ENCODE measurements at regions of chr17 and their contacts with region 1.

Region 1: DNA sequence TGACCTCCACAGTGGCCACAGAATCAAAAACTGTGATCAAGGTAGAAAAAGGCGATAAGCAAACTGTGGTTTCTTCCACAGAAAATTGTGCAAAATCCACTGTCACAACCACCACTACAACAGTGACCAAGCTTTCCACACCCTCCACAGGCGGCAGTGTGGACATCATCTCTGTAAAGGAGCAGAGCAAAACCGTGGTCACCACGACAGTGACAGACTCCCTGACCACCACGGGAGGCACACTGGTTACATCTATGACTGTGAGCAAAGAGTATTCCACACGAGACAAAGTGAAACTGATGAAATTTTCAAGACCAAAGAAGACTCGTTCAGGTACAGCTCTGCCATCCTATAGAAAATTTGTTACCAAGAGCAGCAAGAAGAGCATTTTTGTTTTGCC is 83.6 kb downstream of the C17orf58 start:
- DNase-seq: peak; percentile 8
- H3K4me3 Mint-ChIP-seq: no peak overlapping the region
- H3K27ac Mint-ChIP-seq: no peak overlapping the region
- H3K4me1 Mint-ChIP-seq: peaks cover 18% of the 10 kb centered on the region
- H3K27me3 Mint-ChIP-seq: no peaks in the 10 kb centered on the region

Region 2: GRCh38 chr17:67717624-67718329 is 194.9 kb before region 1 on chr17 and contains the start of gene NOL11:
- CTCF ChIA-PET with region 1: no interaction called
- intact Hi-C with region 1: loop called (anchors 1 kb)
- DNase-seq: peak; percentile 100
- H3K4me3 Mint-ChIP-seq: peak within 1 kb of the TSS; percentile 100
- H3K27ac Mint-ChIP-seq: peak within 1 kb of the TSS; percentile 99
- H3K4me1 Mint-ChIP-seq: peaks cover 20% of the 10 kb centered on the region
- H3K27me3 Mint-ChIP-seq: peaks cover 3% of the 10 kb centered on the region
- total RNA-seq, gene NOL11: 49.7 to 54.1 TPM

Region 3: GRCh38 chr17:67836205-67836987 is 76.3 kb before region 1 on chr17:
- CTCF ChIA-PET with region 1: no interaction called
- intact Hi-C with region 1: loop called (anchors 2 kb)
- DNase-seq: no peak
- H3K4me3 Mint-ChIP-seq: no peak overlapping the region
- H3K27ac Mint-ChIP-seq: peak overlapping the region; percentile 75
- H3K4me1 Mint-ChIP-seq: peaks cover 74% of the 10 kb centered on the region
- H3K27me3 Mint-ChIP-seq: no peaks in the 10 kb centered on the region

Region 4: GRCh38 chr17:67862614-67863217 is 49.9 kb before region 1 on chr17:
- CTCF ChIA-PET with region 1: no interaction called
- intact Hi-C with region 1: loop called (anchors 5 kb)
- DNase-seq: no peak
- H3K4me3 Mint-ChIP-seq: no peak overlapping the region
- H3K27ac Mint-ChIP-seq: no peak overlapping the region
- H3K4me1 Mint-ChIP-seq: peaks cover 55% of the 10 kb centered on the region
- H3K27me3 Mint-ChIP-seq: no peaks in the 10 kb centered on the region

Region 5: DNA sequence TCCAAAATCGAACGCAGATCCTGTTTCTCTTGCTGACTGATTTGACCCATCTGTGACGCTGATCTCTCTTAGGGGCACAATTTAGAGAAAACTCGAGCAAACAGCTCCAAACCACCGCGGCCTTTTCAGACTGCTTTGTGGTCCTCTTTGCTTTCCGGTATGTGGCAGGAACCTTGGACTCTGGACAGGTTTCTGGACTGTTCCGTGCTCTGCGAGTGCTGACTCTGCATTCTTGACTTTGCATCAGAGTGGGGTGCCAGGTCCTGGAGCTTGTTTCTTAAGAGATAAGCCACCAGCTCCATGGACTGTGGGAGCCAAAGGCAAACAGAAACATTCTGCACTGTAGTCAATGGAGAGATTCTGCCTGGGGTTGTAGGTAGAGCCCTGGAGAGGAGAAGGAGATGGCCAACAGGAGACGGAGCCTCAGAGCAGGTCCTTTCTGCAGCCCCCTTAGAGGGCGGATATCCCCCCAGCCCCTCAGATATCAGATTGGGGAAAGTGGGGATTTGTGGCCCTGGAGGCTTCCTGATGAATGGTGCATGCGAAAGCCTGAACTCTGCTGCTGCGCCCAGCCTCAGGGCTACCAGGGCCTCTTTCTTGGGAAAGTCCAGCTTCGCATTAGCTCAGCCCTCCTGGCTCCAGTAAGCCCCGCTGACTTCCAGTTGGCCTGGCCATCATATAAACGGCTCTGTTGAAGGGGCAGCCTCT is 479.1 kb after region 1 on chr17:
- CTCF ChIA-PET with region 1: no interaction called
- intact Hi-C with region 1: no loop called
- DNase-seq: no peak
- H3K4me3 Mint-ChIP-seq: no peak overlapping the region
- H3K27ac Mint-ChIP-seq: no peak overlapping the region
- H3K4me1 Mint-ChIP-seq: peaks cover under 1% of the 10 kb centered on the region
- H3K27me3 Mint-ChIP-seq: no peaks in the 10 kb centered on the region